AG04450 (cell line): ENCODE measurements at regions of chr3 and their contacts with region 1.

Region 1: DNA sequence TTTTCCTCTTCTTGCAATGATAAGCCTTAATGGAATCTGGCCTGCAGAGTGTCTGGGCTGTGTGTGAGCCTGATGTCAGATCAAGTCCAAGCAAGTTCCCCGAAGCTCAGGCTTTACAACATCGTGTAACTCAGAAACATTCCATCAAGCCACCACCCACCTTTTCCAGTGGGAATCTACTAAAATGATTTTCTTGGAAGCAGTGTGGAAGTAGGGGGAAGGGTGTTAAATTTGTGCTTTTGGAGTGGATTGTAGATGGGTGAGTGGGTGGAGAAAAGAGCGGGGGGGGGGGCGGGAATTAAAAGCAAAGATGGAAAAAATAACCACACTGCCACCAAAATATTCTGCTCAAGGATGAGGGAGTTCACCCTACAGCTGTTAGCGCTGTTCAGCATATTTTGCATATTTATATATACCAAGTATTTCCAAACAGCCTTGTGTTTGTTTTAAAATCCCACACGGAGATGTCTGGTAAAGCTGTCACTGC is 53.6 kb downstream of the VGLL3 start:
- DNase-seq: peak; percentile 84
- H3K4me3 ChIP-seq: no peak overlapping the region
- H3K27ac ChIP-seq: peak overlapping the region; percentile 88
- H3K27me3 ChIP-seq: no peaks in the 10 kb centered on the region
- CTCF ChIP-seq: no peak

Region 2: GRCh38 chr3:86785386-86785785 is 152.0 kb before region 1 on chr3:
- CTCF ChIA-PET with region 1: interaction called, 6 read pairs
- POLR2A ChIA-PET with region 1: interaction called, 15 read pairs
- DNase-seq: no peak
- H3K4me3 ChIP-seq: no peak overlapping the region
- H3K27ac ChIP-seq: no peak overlapping the region
- H3K27me3 ChIP-seq: no peaks in the 10 kb centered on the region
- CTCF ChIP-seq: peak; percentile 67

Region 3: DNA sequence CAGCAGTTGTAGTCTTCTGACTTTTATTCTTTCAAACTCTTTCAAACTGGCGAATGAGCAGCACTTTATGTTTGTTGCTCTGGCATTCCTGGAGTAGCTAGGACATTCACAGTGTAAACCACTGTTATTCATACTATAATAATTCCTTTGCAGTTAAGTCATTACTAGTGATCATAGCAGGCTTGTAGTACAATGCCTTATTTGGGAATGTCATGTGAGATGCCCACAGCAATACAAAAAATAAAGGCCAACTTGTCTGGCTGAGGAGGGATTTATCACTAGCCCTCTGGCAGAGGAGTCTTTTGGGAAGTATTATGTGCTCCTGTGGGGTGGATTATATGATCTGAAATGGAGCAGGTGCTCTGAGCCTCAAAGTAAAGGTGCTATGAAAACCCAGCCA is 143.6 kb before region 1 on chr3:
- CTCF ChIA-PET with region 1: no interaction called
- POLR2A ChIA-PET with region 1: interaction called, 15 read pairs
- DNase-seq: peak; percentile 93
- H3K4me3 ChIP-seq: no peak overlapping the region
- H3K27ac ChIP-seq: peak overlapping the region; percentile 97
- H3K27me3 ChIP-seq: no peaks in the 10 kb centered on the region
- CTCF ChIP-seq: no peak

Region 4: DNA sequence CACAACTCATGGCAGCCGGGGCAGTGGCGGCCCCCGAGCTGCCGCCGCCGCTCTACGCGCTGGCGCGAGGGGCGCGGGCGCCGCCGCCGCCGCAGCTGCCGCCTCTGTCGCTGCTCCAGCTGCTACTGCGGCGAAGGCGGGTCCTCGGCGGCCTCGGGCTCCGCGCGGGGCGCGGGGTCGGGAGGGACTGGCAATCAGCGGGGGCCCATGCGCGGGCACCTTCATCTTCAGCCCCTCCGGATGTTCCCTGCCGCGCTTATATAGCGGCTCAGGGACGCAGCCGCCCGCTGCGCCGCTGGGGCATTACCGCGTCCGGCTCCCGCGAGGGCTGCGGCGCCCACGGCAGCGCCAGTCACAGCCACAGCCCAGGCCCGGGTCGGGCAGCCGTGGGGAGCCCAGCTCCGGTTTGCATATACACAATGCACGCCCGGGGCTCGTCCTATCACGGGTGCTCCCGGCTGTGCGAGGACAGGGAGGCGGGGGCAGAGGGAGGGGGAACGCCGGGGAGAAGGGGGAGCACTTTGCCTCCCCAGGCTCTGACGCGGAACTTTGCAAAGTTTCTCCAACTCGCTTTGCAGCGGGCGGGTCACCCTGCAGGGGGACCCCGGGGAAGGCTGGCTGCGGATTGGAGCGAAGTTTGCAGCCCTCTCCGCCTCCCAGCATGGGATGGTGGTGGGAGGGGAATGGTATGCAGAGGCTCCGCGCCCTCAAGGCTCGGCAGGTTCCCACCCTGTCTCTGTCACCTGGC is 53.6 kb after region 1 on chr3 and contains the start of gene VGLL3:
- CTCF ChIA-PET with region 1: no interaction called
- POLR2A ChIA-PET with region 1: interaction called, 18 read pairs
- DNase-seq: peak; percentile 64
- H3K4me3 ChIP-seq: peak within 1 kb of the TSS; percentile 94
- H3K27ac ChIP-seq: peak within 1 kb of the TSS; percentile 92
- H3K27me3 ChIP-seq: no peaks in the 10 kb centered on the region
- CTCF ChIP-seq: peak; percentile 40; the same call in 1 of the 2 replicates
- polyA plus RNA-seq, gene VGLL3: 27.2 and 28.3 TPM in 2 replicates